GM12878 (cell line): ENCODE measurements at regions of chr15 and their contacts with region 1.

Region 1: DNA sequence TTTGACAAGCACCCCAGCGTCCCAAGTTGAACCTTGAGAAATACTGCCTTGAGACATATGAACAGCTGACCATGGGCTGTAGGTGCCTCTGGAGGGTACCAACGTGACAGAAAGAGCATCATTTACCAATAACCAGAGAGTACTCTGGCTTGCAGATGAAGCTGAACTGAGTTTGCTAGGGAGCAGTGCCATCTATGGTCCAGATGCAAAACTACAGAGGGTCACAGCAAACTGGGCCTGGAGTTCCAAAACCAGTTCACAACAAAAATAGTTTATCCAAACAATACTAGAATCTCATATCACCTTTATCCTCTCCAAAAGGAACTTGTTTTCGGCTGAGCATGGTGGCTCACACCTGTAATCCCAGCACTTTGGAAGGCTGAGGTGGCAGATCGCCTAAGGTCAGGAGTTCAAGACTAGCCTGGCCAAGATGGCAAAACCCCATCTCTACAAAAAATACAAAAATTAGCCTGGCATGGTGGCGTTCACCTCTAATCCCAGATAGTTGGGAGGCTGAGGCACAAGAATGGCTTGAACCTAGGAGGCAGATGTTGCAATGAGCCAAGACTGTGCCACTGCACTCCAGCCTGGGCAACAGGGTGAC is 69.3 kb downstream of the CHAC1 start:
- DNase-seq: peak; percentile 21
- ATAC-seq: peak; percentile 87
- H3K4me3 ChIP-seq: no peak overlapping the region
- H3K27ac ChIP-seq: no peak overlapping the region
- H3K4me1 ChIP-seq: no peaks in the 10 kb centered on the region
- H3K27me3 ChIP-seq: no peaks in the 10 kb centered on the region
- CTCF ChIP-seq: peak; percentile 73 to 90 (median 76); a peak in 5 of 6 replicates
- EP300 ChIP-seq: no peak
- POLR2A ChIP-seq: no peak
- RAD21 ChIP-seq: peak; percentile 87

Region 2: GRCh38 chr15:40256638-40257235 is 765.9 kb before region 1 on chr15:
- CTCF ChIA-PET with region 1: no interaction called
- POLR2A ChIA-PET with region 1: no interaction called
- RAD21 ChIA-PET with region 1: no interaction called
- SMC1A ChIA-PET with region 1: no interaction called
- in situ Hi-C with region 1: no loop called
- intact Hi-C with region 1: no loop called
- DNase-seq: no peak
- ATAC-seq: peak; percentile 33
- H3K4me3 ChIP-seq: no peak overlapping the region
- H3K27ac ChIP-seq: no peak overlapping the region
- H3K4me1 ChIP-seq: peaks cover 3% of the 10 kb centered on the region; the same call in 1 of the 2 replicates
- H3K27me3 ChIP-seq: peaks cover 0 to 3% of the 10 kb centered on the region in 2 experiments; a peak in 3 of 4 replicates
- CTCF ChIP-seq: no peak
- EP300 ChIP-seq: no peak
- POLR2A ChIP-seq: no peak
- RAD21 ChIP-seq: no peak

Region 3: DNA sequence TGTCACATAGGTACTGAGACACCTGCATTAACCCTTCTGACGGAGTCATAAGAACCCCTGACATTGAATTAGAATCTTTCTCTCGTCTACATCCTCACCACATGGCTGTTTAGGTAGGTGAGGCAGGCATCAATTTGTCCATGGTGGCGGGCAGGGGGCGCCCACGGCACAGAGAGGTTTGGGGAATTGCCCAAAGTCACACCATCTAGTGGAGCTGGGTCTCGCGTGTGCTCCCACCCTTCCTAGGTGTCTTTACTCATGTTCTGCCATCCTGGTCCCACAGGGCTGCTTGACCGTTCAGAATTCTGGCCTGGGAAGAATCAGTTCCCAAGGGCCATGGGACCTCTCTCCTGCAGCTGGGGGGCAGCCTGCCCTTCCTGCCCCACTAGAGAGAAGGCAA is 108.1 kb before region 1 on chr15:
- CTCF ChIA-PET with region 1: interaction called, 157 read pairs
- POLR2A ChIA-PET with region 1: no interaction called
- RAD21 ChIA-PET with region 1: interaction called, 7 read pairs
- SMC1A ChIA-PET with region 1: interaction called, 8 read pairs
- in situ Hi-C with region 1: no loop called
- intact Hi-C with region 1: no loop called
- DNase-seq: no peak
- ATAC-seq: peak; percentile 73
- H3K4me3 ChIP-seq: no peak overlapping the region
- H3K27ac ChIP-seq: no peak overlapping the region
- H3K4me1 ChIP-seq: peaks cover 9% of the 10 kb centered on the region
- H3K27me3 ChIP-seq: no peaks in the 10 kb centered on the region; a peak in 1 of 4 replicates
- CTCF ChIP-seq: peak; percentile 39 to 53 (median 49); a peak in 4 of 6 replicates
- EP300 ChIP-seq: no peak
- POLR2A ChIP-seq: no peak
- RAD21 ChIP-seq: peak; percentile 24; the same call in 1 of the 2 replicates

Region 4: DNA sequence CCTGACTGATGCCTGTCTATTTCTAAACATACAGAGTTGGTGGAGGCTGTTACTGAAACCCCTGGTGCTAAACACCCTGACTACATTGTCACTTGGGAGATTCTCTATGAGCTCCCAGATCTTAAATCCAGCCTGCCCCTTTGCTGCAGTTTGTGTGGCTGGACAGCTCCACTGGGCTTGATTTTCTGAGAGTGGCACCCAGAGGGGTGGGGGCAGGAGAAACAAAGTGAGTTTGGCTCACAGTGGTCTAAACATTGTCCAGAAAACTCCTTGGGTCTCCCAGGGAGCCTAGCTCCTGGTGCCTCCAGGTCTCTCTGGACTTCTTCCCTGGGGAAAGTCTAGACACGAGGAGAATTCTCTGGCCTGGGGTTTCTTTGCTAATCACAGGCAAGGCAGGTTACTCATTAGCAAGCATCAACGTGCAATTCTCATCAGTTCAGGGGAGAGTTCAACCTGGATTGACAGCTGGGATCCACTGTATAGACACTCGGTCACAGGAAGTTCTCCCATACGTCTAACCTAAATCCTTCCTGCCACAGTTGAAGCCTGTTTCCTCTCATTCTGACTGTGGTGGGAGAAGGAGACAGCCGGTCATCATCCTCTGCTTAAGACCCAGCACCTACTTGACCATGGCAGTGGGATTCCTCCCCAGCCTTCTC is 100.5 kb before region 1 on chr15:
- CTCF ChIA-PET with region 1: no interaction called
- POLR2A ChIA-PET with region 1: no interaction called
- RAD21 ChIA-PET with region 1: no interaction called
- SMC1A ChIA-PET with region 1: no interaction called
- in situ Hi-C with region 1: loop called (anchors 5 kb)
- intact Hi-C with region 1: no loop called
- DNase-seq: no peak
- ATAC-seq: no peak
- H3K4me3 ChIP-seq: no peak overlapping the region
- H3K27ac ChIP-seq: no peak overlapping the region
- H3K4me1 ChIP-seq: peaks cover 8% of the 10 kb centered on the region; the same call in 1 of the 2 replicates
- H3K27me3 ChIP-seq: peaks cover 11 to 18% of the 10 kb centered on the region in 2 experiments
- CTCF ChIP-seq: no peak
- EP300 ChIP-seq: no peak
- POLR2A ChIP-seq: no peak
- RAD21 ChIP-seq: no peak

Region 5: DNA sequence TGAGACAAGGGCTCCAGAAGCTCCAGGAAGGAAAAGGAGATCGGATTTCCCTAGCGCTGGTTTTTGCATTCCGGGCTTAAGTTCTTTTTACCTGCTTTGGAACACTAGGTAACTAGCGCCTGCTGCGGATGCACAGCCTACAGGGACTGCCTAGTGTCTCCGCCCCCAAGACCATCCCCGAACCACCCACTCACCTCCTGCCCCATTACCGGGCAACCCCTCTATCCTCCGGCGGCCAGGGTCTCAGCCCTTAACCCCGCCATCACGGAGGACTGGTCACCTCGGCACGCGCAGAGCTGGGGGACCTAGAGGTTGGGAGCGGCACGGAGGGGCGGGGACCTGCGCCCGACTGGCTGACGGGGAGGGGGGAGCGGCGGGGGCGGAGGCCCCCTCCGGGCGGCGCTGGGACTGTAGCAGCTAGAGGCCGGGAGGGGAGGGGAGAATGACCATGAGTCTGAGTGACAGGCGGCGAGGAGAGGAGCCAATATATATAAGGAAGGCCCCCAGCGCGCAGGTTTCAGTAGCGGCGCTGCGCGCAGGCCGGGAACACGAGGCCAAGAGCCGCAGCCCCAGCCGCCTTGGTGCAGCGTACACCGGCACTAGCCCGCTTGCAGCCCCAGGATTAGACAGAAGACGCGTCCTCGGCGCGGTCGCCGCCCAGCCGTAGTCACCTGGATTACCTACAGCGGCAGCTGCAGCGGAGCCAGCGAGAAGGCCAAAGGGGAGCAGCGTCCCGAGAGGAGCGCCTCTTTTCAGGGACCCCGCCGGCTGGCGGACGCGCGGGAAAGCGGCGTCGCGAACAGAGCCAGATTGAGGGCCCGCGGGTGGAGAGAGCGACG is 93.5 kb before region 1 on chr15 and contains the start of gene DLL4:
- CTCF ChIA-PET with region 1: interaction called, 24 read pairs
- POLR2A ChIA-PET with region 1: interaction called, 4 read pairs
- RAD21 ChIA-PET with region 1: interaction called, 5 read pairs
- SMC1A ChIA-PET with region 1: interaction called, 8 read pairs
- in situ Hi-C with region 1: loop called (anchors 5 kb)
- intact Hi-C with region 1: no loop called
- DNase-seq: no peak
- ATAC-seq: peak; percentile 54
- H3K4me3 ChIP-seq: peak within 1 kb of the TSS; percentile 64
- H3K27ac ChIP-seq: no peak within 1 kb of the TSS
- H3K4me1 ChIP-seq: peaks cover 33% of the 10 kb centered on the region
- H3K27me3 ChIP-seq: peaks cover 22 to 31% of the 10 kb centered on the region in 2 experiments
- CTCF ChIP-seq: no peak
- EP300 ChIP-seq: no peak
- POLR2A ChIP-seq: peak; percentile 78
- RAD21 ChIP-seq: no peak
- polyA plus RNA-seq, gene DLL4: not detected